Prostate gland (tissue), 2 donors: ENCODE measurements at regions of chrX and their contacts with region 1.

Region 1: DNA sequence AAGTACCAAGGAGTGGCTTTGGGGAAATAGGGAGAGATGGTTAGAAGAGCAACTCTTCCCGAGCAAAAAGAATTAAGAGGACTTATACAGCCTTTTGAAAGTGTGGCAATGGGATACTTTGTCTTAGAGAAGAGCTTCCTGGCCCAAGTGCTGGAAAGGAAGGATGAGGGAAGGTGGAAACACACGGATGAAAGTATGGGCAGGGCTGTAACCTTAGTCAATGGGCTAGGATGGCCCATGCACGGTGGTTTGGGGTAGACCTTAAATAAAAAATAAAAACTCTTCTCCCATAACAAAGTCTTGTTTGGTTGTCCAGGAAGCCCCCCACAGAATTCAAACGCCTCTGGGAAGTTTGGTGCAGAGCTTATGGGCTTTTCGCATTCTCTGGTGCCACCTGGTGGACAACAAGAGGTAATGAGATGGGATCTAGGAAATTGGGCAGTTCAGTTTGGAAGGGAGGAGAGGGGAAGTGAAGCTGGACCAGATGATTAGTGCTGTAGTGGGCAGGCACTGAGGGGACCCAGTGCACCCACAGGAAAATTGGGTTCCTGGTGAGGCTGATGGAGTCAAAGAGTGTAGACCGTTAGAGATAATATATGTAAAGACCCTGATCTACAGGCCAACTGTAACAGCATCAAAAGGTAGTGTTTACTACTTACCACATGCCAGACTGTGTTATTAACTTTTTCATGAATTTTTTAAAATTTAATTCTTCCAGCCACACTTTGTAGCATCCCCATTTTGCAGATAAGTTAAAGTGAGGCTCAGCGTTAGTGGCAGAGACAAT is 13.8 kb upstream of the ENOX2 start:
- DNase-seq: peak; percentile 9
- H3K4me3 ChIP-seq: no peak overlapping the region
- H3K27ac ChIP-seq: no peak overlapping the region
- H3K4me1 ChIP-seq: no peaks in the 10 kb centered on the region
- H3K27me3 ChIP-seq: no peaks in the 10 kb centered on the region
- CTCF ChIP-seq: peak; percentile 27 to 65 (median 56)
- POLR2A ChIP-seq: no peak

Region 2: DNA sequence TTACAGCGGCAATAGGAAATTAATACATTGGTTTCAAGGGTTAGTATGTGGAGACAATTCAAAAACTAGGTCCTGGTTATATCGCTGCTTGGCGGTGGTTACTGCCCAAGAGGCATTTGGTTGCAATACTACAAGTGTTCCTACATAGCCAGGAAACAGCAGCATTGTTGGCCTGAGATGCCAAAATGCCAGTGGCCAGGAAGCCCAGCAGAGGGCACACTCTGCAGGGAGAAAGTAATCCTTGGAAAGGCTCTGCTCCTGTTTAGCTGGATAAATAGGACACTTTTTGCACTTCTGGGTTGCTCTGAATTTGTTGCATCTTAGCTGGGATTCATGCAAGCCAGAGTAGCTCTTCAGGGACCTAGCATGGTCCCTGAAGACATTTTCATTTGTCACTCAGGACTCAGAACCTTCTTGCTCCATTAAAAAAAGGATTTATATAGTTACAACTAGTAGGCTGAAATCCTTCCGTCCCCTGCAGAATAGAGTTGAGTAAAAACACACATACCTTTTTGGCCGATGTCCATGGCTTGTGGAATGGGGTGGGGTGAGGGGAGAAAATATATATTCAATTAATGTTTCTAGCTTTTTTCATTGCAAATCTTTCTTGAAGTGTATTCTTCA is 523.3 kb before region 1 on chrX:
- intact Hi-C with region 1: loop called (anchors 2 kb)
- DNase-seq: peak; percentile 13
- H3K4me3 ChIP-seq: no peak overlapping the region
- H3K27ac ChIP-seq: no peak overlapping the region
- H3K4me1 ChIP-seq: no peaks in the 10 kb centered on the region
- H3K27me3 ChIP-seq: no peaks in the 10 kb centered on the region
- CTCF ChIP-seq: peak in 3 of 4 experiments; percentile 32 to 49 (median 48)
- POLR2A ChIP-seq: no peak

Region 3: DNA sequence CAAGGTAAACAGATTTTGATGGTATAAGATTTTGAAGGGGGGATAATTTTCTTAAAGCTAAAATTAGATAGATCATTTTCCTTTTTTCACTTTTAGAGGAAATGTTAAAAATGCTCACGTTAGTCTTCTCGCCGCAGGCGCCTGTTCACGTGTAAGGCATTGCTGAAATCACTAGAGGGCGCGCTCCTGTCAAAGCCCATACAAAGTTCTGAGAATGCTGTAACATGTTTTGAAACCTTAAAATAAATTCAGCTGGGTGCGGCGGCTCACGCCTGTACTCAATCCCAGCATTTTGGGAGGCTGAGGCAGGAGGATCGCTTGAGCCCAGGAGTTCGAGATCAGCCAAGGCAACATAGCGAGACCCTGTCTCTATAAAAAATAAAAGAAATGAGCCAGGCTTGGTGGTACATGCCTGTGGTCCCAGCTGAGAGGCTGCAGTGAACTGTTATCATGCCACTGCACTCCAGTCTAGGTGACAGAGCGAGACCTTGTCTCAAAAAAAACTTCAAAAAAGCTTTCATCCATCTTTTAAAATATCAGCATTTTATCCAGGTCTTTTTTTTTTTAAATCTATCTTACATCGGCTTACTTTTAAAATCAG is 377.0 kb before region 1 on chrX:
- intact Hi-C with region 1: loop called (anchors 5 kb)
- DNase-seq: peak; percentile 7
- H3K4me3 ChIP-seq: no peak overlapping the region
- H3K27ac ChIP-seq: no peak overlapping the region
- H3K4me1 ChIP-seq: no peaks in the 10 kb centered on the region
- H3K27me3 ChIP-seq: no peaks in the 10 kb centered on the region
- CTCF ChIP-seq: peak in 3 of 4 experiments; percentile 21 to 40 (median 40)
- POLR2A ChIP-seq: no peak

Region 4: DNA sequence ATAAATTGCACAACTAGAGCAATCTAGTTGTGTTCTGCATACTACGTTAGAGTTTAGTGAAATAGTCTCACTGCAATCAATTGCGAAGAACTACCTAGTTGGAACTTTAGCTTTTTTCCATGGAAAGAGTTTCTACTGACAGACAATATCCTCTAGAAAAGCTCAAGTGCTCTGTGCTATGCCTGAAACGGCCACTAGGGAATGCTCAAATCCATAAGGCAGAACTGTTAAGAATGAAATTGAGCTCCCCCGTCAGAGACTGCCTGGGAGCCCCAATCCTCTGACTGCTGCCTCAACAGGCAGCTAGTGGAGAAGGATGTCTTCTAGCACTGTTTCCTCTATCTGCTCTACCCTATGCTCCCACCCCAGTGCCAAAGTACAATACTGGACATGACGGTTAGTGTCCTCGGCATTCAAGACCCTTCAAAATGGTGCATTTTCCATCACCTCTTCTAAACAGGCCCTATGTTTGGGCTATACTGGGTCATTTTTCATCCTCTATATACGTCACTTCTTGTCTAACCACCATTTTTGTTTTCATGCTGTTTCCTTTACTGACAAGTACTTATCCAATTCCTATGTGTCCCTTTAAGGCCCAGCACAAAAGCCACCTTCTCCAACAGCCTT is 1175.7 kb after region 1 on chrX:
- intact Hi-C with region 1: no loop called
- DNase-seq: peak; percentile 32
- H3K4me3 ChIP-seq: no peak overlapping the region
- H3K27ac ChIP-seq: no peak overlapping the region
- H3K4me1 ChIP-seq: no peaks in the 10 kb centered on the region
- H3K27me3 ChIP-seq: no peaks in the 10 kb centered on the region
- CTCF ChIP-seq: peak; percentile 41 to 59 (median 54)
- POLR2A ChIP-seq: no peak